ENCODE measurements at regions of chr19 and their contacts with region 1.

Region 1: GRCh38 chr19:12669270-12670158 is 2.9 kb downstream of the WDR83 start:
- DNase-seq: peak; percentile 85 to 94
- H3K4me3 ChIP-seq: peak overlapping the region; percentile 78 to 97 (median 88)
- H3K27ac ChIP-seq: peak overlapping the region; percentile 92 to 98 (median 96)
- H3K4me1 ChIP-seq: peaks cover 33 to 69% (median 59%) of the 10 kb centered on the region in 4 donors
- H3K27me3 ChIP-seq: no peaks in the 10 kb centered on the region
- CTCF ChIP-seq: peak in 1 of 7 experiments; percentile 17
- EP300 ChIP-seq: no peak
- POLR2A ChIP-seq: no peak

Region 2: DNA sequence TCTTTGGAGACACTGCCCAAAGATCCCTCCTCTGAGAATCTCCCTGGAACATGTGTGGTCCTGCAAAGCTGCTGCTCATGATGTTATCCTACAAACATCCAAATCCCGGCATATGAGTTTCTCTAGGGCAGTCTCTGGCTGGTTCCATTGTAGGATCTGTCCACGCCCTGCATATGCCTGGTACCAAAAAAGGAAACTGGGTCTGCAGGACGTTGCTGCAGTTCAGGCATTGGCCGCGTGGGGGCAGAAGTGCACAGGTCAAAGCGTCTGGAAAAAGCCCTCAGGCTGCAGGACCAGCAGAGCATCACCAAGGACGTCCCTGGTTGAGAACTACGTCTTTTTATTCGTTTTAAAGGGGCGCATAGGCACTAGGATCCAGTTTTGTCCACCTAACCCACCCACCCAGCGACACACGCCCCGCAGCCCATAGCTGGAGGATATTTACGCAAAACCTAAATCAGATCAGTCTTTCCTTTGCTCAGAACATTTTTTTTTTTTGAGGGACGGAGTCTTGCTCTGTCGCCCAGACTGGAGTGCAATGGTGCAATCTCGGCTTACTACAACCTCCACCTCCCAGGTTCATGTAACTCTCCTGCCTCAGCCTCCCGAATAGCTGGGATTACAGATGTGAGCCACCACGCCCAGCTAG is 105.4 kb before region 1 on chr19:
- intact Hi-C with region 1: loop called (anchors 10 kb)
- DNase-seq: peak; percentile 92 to 95
- H3K4me3 ChIP-seq: no peak overlapping the region
- H3K27ac ChIP-seq: peak overlapping the region in 1 of 5 donors; percentile 54
- H3K4me1 ChIP-seq: peaks cover 0 to 10% (median 9%) of the 10 kb centered on the region in 4 donors
- H3K27me3 ChIP-seq: no peaks in the 10 kb centered on the region
- CTCF ChIP-seq: peak in 5 of 7 experiments; percentile 89 to 96 (median 93)
- EP300 ChIP-seq: no peak
- POLR2A ChIP-seq: no peak

Region 3: DNA sequence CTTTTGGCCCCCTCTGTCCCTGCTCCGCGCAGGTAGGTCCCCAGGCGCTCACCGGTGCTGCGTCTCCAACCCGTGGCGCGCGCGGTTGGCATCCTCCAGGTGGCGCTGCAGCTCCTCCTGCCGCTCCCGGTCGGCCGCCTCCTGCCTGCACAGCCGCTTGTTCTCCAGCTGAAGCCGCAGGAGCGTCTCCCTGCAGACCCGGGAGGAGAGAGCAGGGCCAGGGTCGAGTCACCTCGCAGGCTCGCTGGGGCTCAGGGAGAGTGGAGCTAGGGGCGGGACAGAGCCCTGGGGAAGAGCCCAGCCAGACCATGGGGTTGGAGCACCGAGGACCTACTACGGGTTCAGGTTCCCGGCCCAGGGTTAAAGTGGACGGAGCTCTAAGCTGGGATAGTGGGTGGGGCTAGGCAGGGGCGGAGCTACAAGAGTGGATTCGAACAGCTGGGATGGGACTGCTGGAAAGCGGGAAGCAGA is 96.6 kb after region 1 on chr19:
- intact Hi-C with region 1: no loop called
- DNase-seq: peak; percentile 93 to 95
- H3K4me3 ChIP-seq: peak overlapping the region; percentile 30 to 53 (median 42)
- H3K27ac ChIP-seq: peak overlapping the region in 4 of 5 donors; percentile 44 to 78 (median 66)
- H3K4me1 ChIP-seq: peaks cover 0 to 18% (median 15%) of the 10 kb centered on the region in 4 donors
- H3K27me3 ChIP-seq: no peaks in the 10 kb centered on the region
- CTCF ChIP-seq: peak in 6 of 7 experiments; percentile 32 to 94 (median 80)
- EP300 ChIP-seq: no peak
- POLR2A ChIP-seq: no peak